CD4-positive, alpha-beta T cell (primary cell): ENCODE measurements at regions of chr3 and their contacts with region 1.

Region 1: GRCh38 chr3:183635431-183636220 is at the start of gene KLHL24:
- DNase-seq: peak; percentile 80 to 95 (median 86)
- ATAC-seq: peak; percentile 75
- H3K4me3 ChIP-seq: peak within 1 kb of the TSS; percentile 96
- H3K4me3 Mint-ChIP-seq: peak within 1 kb of the TSS; percentile 100
- H3K27ac ChIP-seq: peak within 1 kb of the TSS; percentile 93 to 99
- H3K27ac Mint-ChIP-seq: peak within 1 kb of the TSS; percentile 98
- H3K4me1 ChIP-seq: peaks cover 27% of the 10 kb centered on the region
- H3K4me1 Mint-ChIP-seq: peaks cover 42% of the 10 kb centered on the region
- H3K27me3 ChIP-seq: no peaks in the 10 kb centered on the region
- H3K27me3 Mint-ChIP-seq: no peaks in the 10 kb centered on the region
- CTCF ChIP-seq: no peak
- total RNA-seq, gene KLHL24: 190 to 191 TPM

Region 2: DNA sequence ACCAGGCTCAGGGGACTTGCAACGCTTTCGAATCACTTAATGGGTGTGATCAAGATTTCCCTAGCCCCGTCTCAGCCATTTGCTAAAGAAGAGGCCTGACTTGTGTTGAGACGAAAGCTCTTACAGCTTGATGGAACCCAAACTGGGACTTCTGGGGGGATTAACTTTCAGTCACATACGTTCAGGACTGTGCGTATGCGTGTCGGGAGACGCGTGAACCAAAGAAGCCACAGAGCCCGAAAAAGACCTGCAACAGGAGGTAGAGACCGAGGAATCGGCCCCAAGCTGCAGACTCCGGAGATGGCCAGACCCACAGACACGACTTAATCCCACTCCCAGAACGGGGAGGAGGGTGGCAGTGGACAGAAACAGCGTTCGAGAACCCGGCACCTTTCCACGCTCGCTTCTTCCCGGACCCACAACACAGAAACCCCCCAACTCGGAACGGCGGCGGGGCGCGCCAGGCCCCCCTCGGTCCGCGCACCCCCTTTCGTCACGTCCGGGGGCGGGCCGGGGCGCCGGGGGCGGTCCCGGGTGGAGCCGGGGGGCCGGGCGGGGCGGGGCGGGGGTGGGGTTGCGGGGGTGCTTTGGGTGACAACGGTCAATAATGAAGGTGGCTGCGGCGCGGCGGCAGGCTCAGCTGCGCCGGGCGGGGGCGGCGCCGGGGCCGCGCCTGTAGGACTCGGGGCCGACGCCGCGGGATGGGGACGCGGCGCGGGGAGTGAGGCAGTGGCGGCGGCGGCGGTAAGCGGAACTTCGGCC is 842.5 kb before region 1 on chr3 and contains the start of gene ATP11B:
- CTCF ChIA-PET with region 1: no interaction called
- POLR2A ChIA-PET with region 1: interaction called, 3 read pairs
- intact Hi-C with region 1: loop called in 1 of 2 experiments (anchors 10 kb)
- DNase-seq: peak; percentile 60 to 90 (median 75)
- ATAC-seq: peak; percentile 59
- H3K4me3 ChIP-seq: peak within 1 kb of the TSS; percentile 84
- H3K4me3 Mint-ChIP-seq: peak within 1 kb of the TSS; percentile 100
- H3K27ac ChIP-seq: peak within 1 kb of the TSS; percentile 95 to 98
- H3K27ac Mint-ChIP-seq: peak within 1 kb of the TSS; percentile 100
- H3K4me1 ChIP-seq: peaks cover 17% of the 10 kb centered on the region
- H3K4me1 Mint-ChIP-seq: peaks cover 43% of the 10 kb centered on the region
- H3K27me3 ChIP-seq: no peaks in the 10 kb centered on the region
- H3K27me3 Mint-ChIP-seq: no peaks in the 10 kb centered on the region
- CTCF ChIP-seq: no peak
- total RNA-seq, gene ATP11B: 139 to 143 TPM

Region 3: GRCh38 chr3:183481582-183481981 is 154.0 kb before region 1 on chr3:
- CTCF ChIA-PET with region 1: no interaction called
- POLR2A ChIA-PET with region 1: interaction called, 7 read pairs
- intact Hi-C with region 1: loop called in 1 of 2 experiments (anchors 5 kb)
- DNase-seq: no peak
- ATAC-seq: no peak
- H3K4me3 ChIP-seq: no peak overlapping the region
- H3K4me3 Mint-ChIP-seq: no peak overlapping the region
- H3K27ac ChIP-seq: no peak overlapping the region
- H3K27ac Mint-ChIP-seq: no peak overlapping the region
- H3K4me1 ChIP-seq: no peaks in the 10 kb centered on the region
- H3K4me1 Mint-ChIP-seq: peaks cover 12% of the 10 kb centered on the region
- H3K27me3 ChIP-seq: no peaks in the 10 kb centered on the region
- H3K27me3 Mint-ChIP-seq: no peaks in the 10 kb centered on the region
- CTCF ChIP-seq: no peak

Region 4: GRCh38 chr3:183555541-183556081 is 80.0 kb before region 1 on chr3 and contains the start of gene KLHL6:
- CTCF ChIA-PET with region 1: no interaction called
- POLR2A ChIA-PET with region 1: interaction called, 38 read pairs
- intact Hi-C with region 1: loop called (anchors 2 kb)
- DNase-seq: peak; percentile 51 to 87 (median 66)
- ATAC-seq: peak; percentile 92
- H3K4me3 ChIP-seq: peak within 1 kb of the TSS; percentile 82
- H3K4me3 Mint-ChIP-seq: peak within 1 kb of the TSS; percentile 99
- H3K27ac ChIP-seq: peak within 1 kb of the TSS; percentile 85 to 87
- H3K27ac Mint-ChIP-seq: peak within 1 kb of the TSS; percentile 99
- H3K4me1 ChIP-seq: peaks cover 36% of the 10 kb centered on the region
- H3K4me1 Mint-ChIP-seq: peaks cover 56% of the 10 kb centered on the region
- H3K27me3 ChIP-seq: no peaks in the 10 kb centered on the region
- H3K27me3 Mint-ChIP-seq: no peaks in the 10 kb centered on the region
- CTCF ChIP-seq: peak; percentile 14
- total RNA-seq, gene KLHL6: 23.9 to 24.2 TPM

Region 5: DNA sequence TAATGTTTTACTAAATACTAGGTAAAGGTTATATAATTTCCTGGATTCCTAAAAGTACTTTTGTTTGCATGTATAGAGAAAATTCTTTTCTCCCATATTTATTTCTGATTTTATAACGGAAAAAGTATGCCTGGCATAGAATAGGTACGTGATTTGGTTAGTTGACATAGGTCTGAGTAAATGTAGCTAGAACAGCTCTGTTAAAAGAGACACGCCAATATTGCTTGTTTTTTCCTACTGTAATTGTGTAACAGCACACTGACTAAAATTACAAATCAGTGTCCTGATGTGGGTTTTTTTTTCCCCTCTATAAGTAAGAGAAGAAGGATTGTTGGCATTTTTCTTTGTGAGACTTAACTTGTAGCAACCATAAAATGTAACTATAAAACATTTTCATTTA is 26.5 kb after region 1 on chr3:
- CTCF ChIA-PET with region 1: no interaction called
- POLR2A ChIA-PET with region 1: interaction called, 16 read pairs
- intact Hi-C with region 1: no loop called
- DNase-seq: no peak
- ATAC-seq: no peak
- H3K4me3 ChIP-seq: no peak overlapping the region
- H3K4me3 Mint-ChIP-seq: no peak overlapping the region
- H3K27ac ChIP-seq: no peak overlapping the region
- H3K27ac Mint-ChIP-seq: no peak overlapping the region
- H3K4me1 ChIP-seq: peaks cover 3% of the 10 kb centered on the region
- H3K4me1 Mint-ChIP-seq: peaks cover 32% of the 10 kb centered on the region
- H3K27me3 ChIP-seq: no peaks in the 10 kb centered on the region
- H3K27me3 Mint-ChIP-seq: no peaks in the 10 kb centered on the region
- CTCF ChIP-seq: no peak

Region 6: GRCh38 chr3:183815563-183815940 is 179.9 kb after region 1 on chr3:
- CTCF ChIA-PET with region 1: no interaction called
- POLR2A ChIA-PET with region 1: interaction called, 10 read pairs
- intact Hi-C with region 1: no loop called
- DNase-seq: peak in 2 of 14 experiments; percentile 25 to 67
- ATAC-seq: peak; percentile 77
- H3K4me3 ChIP-seq: peak overlapping the region; percentile 17
- H3K4me3 Mint-ChIP-seq: peak overlapping the region; percentile 75
- H3K27ac ChIP-seq: peak overlapping the region in 1 of 2 donors; percentile 72
- H3K27ac Mint-ChIP-seq: peak overlapping the region; percentile 90
- H3K4me1 ChIP-seq: peaks cover 12% of the 10 kb centered on the region
- H3K4me1 Mint-ChIP-seq: peaks cover 19% of the 10 kb centered on the region
- H3K27me3 ChIP-seq: no peaks in the 10 kb centered on the region
- H3K27me3 Mint-ChIP-seq: no peaks in the 10 kb centered on the region
- CTCF ChIP-seq: no peak

Region 7: GRCh38 chr3:184185461-184186308 is 550.1 kb after region 1 on chr3 and contains the start of gene ABCF3:
- CTCF ChIA-PET with region 1: no interaction called
- POLR2A ChIA-PET with region 1: no interaction called
- intact Hi-C with region 1: loop called in 1 of 2 experiments (anchors 10 kb)
- DNase-seq: peak; percentile 98 to 100 (median 99)
- ATAC-seq: peak; percentile 95
- H3K4me3 ChIP-seq: peak within 1 kb of the TSS; percentile 81
- H3K4me3 Mint-ChIP-seq: peak within 1 kb of the TSS; percentile 99
- H3K27ac ChIP-seq: peak within 1 kb of the TSS; percentile 15 to 69
- H3K27ac Mint-ChIP-seq: peak within 1 kb of the TSS; percentile 87
- H3K4me1 ChIP-seq: peaks cover 32% of the 10 kb centered on the region
- H3K4me1 Mint-ChIP-seq: peaks cover 47% of the 10 kb centered on the region
- H3K27me3 ChIP-seq: no peaks in the 10 kb centered on the region
- H3K27me3 Mint-ChIP-seq: no peaks in the 10 kb centered on the region
- CTCF ChIP-seq: no peak
- total RNA-seq, gene ABCF3: 163 to 166 TPM

Region 8: GRCh38 chr3:185084901-185085300 is 1449.3 kb after region 1 on chr3:
- CTCF ChIA-PET with region 1: no interaction called
- POLR2A ChIA-PET with region 1: no interaction called
- intact Hi-C with region 1: no loop called
- DNase-seq: no peak
- ATAC-seq: no peak
- H3K4me3 ChIP-seq: no peak overlapping the region
- H3K4me3 Mint-ChIP-seq: no peak overlapping the region
- H3K27ac ChIP-seq: no peak overlapping the region
- H3K27ac Mint-ChIP-seq: no peak overlapping the region
- H3K4me1 ChIP-seq: no peaks in the 10 kb centered on the region
- H3K4me1 Mint-ChIP-seq: no peaks in the 10 kb centered on the region
- H3K27me3 ChIP-seq: no peaks in the 10 kb centered on the region
- H3K27me3 Mint-ChIP-seq: peaks cover 4% of the 10 kb centered on the region
- CTCF ChIP-seq: no peak